ENCODE measurements at regions of chr1 and their contacts with region 1.

Region 1: GRCh38 chr1:23249787-23250454 is 32.6 kb upstream of the HTR1D start:
- DNase-seq: no peak
- H3K4me3 Mint-ChIP-seq: no peak overlapping the region
- H3K27ac Mint-ChIP-seq: no peak overlapping the region
- H3K4me1 Mint-ChIP-seq: no peaks in the 10 kb centered on the region
- H3K27me3 Mint-ChIP-seq: no peaks in the 10 kb centered on the region

Region 2: DNA sequence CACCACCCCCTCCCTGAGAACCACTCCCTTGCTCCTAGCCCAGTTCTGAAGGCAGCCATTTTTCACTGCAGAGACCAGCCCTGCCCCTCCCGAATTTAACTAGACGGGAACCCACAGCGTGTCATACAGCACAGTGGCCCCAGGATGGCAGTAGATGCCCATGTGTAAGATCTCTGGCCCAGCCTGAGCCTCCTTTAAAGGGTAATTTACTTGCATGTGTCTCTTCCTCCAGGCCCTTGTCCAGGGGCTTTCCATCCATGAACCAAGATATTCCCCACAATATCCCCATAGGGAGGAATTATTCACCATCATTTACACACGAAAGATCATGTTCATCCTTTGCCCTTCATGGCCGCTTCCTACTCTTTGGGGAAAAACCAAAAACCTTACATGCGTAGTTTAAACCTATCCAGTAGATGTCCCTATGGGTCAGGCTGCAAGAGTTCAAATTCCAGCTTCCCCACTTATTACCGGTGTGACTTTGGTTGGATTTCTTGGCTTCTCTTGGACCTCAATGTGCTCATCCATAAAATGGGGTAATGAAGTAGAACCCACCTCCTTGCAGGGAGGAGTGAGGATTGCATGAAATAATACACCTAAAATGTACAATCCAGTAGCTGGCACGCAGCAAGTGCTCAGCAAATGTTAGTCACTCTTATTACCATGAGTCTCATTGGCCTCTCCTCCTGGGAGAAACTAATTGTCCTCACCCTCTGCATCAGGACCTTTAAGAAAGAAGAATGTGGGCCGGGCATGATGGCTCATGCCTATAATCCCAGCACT is 273.3 kb before region 1 on chr1:
- CTCF ChIA-PET with region 1: no interaction called
- intact Hi-C with region 1: loop called (anchors 10 kb)
- DNase-seq: peak; percentile 76
- H3K4me3 Mint-ChIP-seq: no peak overlapping the region
- H3K27ac Mint-ChIP-seq: no peak overlapping the region
- H3K4me1 Mint-ChIP-seq: no peaks in the 10 kb centered on the region
- H3K27me3 Mint-ChIP-seq: peaks cover 11% of the 10 kb centered on the region

Region 3: DNA sequence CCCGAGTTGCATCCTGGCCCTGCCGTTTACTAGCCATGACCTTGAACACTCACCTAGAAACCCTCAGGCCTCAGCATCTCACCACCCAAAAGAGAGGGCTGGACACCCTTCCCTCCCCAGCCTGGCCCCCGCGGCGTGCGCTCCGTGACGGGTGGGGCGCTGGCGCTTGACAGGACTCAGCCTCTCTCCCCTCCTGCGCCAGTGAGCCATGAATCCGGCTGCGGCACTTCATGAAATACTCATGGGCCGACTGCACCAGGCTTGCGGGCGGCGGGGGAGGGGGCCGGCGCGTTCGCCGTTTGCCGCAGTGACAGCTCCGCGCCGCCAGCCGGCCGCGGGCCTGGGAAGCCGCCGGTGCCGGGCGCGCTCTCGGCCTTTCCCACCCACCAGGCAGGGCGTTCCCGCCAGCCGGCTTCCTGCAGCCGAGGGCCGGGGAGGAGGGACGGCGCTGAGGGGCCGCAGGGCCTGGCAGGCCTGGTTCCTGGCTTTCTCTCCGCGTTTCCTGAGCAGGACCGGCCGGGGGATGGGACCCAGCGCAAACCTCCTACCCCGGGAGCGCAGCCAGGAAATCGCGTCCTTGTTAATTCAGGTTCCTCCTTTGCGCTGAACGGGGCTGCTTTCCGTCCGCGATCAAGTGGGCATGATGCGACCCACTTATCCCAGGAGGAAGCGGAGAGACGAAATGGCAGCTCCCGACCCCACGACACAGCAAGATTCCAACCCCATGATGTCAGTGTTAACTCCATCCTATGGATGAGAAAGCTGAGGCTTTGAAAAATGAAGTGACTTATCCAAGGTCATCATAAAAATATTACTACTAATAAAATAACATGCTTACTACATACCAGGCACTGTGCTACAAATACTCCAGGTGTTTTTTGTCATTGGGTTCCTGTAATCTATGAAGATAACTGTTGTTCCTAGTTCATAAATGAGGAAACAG is 72.2 kb before region 1 on chr1:
- CTCF ChIA-PET with region 1: no interaction called
- intact Hi-C with region 1: no loop called
- DNase-seq: peak; percentile 68
- H3K4me3 Mint-ChIP-seq: peak overlapping the region; percentile 67
- H3K27ac Mint-ChIP-seq: no peak overlapping the region
- H3K4me1 Mint-ChIP-seq: peaks cover 15% of the 10 kb centered on the region
- H3K27me3 Mint-ChIP-seq: peaks cover 13% of the 10 kb centered on the region

Region 4: DNA sequence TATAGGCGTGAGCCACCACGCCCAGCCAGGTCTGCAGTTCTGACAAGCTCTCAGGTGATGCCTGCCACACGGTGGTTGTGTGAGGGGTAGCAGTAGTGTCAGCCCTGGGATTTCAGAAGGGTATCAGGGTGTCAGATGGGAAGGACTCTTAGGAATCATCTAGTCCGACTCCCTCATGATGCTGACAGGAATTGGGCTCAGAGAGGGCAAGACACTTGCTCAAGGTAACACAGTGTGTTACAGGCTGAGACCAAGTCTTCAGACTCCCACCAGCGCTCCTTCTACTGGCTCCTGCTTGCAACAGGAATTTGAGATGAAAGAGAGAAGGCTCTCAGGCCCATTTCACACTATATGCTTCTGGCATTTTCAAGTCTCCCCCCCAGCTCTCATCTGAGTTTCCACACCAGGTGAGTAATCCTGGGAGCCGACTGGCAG is 39.6 kb before region 1 on chr1:
- CTCF ChIA-PET with region 1: no interaction called
- intact Hi-C with region 1: no loop called
- DNase-seq: peak; percentile 14
- H3K4me3 Mint-ChIP-seq: no peak overlapping the region
- H3K27ac Mint-ChIP-seq: no peak overlapping the region
- H3K4me1 Mint-ChIP-seq: no peaks in the 10 kb centered on the region
- H3K27me3 Mint-ChIP-seq: peaks cover 23% of the 10 kb centered on the region

Measured in activated naive CD4-positive, alpha-beta T cell treated with anti-CD3 and anti-CD28 coated beads for 36 hours (primary cell).